A549 (cell line): ENCODE measurements at regions of chr7 and their contacts with region 1.

Region 1: GRCh38 chr7:108146070-108146837 is 16.1 kb upstream of the LAMB4 start:
- DNase-seq: peak; percentile 21 to 75
- ATAC-seq: peak; percentile 69 to 77; a peak in 4 of 6 replicates
- H3K4me3 ChIP-seq: no peak overlapping the region
- H3K27ac ChIP-seq: no peak overlapping the region
- H3K4me1 ChIP-seq: no peaks in the 10 kb centered on the region; the same call in 2 of the 3 replicates
- CTCF ChIP-seq: peak; percentile 91
- EP300 ChIP-seq: no peak
- POLR2A ChIP-seq: no peak
- RAD21 ChIP-seq: peak; percentile 94 to 95

Region 2: DNA sequence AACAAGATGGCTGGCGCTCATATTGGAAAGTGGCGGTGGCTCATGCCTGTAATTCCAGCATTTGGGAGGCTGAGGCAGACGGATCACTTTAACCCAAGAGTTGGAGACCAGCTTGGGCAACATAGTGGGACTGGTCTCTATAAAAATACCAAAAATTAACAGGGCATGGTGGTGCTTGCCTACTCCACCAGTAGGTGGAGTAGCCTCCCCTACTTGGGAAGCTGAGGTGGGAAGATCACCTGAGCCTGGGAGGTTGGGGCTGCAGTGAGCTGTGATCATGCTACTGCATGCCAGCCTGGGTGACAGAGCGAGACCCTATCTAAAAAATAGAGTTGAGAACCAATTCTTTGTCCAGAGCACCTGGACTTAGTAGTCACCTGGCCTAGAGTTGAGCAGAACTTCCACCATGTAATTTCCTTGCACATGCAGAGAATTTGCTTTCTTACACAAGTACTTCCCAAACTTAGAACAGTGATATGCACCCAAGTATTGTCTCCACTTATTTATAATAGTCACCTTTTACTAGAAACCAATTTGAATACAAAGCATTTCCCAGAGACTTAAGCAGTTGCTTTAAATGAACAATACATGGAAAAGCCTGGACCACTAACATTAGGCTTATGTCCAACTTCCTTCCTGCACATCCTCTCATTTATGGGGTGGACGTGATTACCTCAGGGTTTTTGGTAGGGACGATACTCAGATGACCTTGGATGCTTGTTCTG is 32.0 kb before region 1 on chr7:
- CTCF ChIA-PET with region 1: interaction called, 12 read pairs
- POLR2A ChIA-PET with region 1: no interaction called
- DNase-seq: peak; percentile 10 to 35
- ATAC-seq: peak; percentile 67 to 91; a peak in 4 of 6 replicates
- H3K4me3 ChIP-seq: no peak overlapping the region
- H3K27ac ChIP-seq: no peak overlapping the region
- H3K4me1 ChIP-seq: no peaks in the 10 kb centered on the region
- CTCF ChIP-seq: peak; percentile 55
- EP300 ChIP-seq: no peak
- POLR2A ChIP-seq: no peak
- RAD21 ChIP-seq: peak; percentile 57 to 81

Region 3: DNA sequence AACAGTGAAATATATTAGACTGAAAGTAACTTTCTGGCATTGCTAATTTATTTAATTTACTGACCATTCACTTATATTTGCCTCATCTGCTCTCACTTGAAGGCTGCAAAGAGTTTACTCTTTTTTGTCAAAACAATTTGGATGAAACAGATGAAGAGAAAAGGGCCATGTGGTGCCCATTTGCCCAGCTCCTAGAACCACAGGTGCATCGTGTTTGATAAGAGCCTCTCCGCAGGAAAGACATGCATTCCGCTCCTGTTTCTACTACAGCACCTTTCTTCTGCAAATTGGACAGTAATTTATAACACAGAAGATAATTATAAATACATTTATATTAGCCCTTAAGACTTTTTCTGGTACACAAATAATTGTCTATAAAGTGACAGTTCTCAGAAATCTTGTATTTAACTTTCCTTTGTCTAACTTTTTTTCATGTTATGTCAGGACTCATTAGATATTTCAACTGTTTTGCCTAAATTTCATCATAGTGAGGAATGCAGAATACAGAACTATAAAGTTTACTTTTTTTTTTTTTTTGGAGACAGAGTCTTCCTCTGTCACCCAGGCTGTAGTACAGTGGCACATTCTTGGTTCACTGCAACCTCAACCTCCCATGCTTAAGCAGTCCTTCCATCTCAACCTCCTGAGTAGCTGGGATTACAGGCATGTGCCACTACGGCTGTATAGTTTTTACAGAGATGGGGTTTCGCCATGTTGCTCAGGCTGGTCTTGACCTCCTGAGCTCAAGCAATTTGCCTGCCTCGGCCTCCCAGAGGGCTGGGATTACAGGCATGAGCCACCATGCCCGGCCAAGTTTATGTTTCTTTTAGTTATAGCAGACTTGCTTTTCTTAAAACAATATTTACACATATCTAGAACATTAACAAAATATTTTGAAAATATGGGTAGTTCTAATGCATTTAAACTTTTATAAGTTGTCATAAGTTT is 17.0 kb before region 1 on chr7:
- CTCF ChIA-PET with region 1: interaction called, 11 read pairs
- POLR2A ChIA-PET with region 1: no interaction called
- DNase-seq: no peak
- ATAC-seq: no peak
- H3K4me3 ChIP-seq: no peak overlapping the region
- H3K27ac ChIP-seq: no peak overlapping the region
- H3K4me1 ChIP-seq: no peaks in the 10 kb centered on the region
- CTCF ChIP-seq: no peak
- EP300 ChIP-seq: no peak
- POLR2A ChIP-seq: no peak
- RAD21 ChIP-seq: no peak

Region 4: DNA sequence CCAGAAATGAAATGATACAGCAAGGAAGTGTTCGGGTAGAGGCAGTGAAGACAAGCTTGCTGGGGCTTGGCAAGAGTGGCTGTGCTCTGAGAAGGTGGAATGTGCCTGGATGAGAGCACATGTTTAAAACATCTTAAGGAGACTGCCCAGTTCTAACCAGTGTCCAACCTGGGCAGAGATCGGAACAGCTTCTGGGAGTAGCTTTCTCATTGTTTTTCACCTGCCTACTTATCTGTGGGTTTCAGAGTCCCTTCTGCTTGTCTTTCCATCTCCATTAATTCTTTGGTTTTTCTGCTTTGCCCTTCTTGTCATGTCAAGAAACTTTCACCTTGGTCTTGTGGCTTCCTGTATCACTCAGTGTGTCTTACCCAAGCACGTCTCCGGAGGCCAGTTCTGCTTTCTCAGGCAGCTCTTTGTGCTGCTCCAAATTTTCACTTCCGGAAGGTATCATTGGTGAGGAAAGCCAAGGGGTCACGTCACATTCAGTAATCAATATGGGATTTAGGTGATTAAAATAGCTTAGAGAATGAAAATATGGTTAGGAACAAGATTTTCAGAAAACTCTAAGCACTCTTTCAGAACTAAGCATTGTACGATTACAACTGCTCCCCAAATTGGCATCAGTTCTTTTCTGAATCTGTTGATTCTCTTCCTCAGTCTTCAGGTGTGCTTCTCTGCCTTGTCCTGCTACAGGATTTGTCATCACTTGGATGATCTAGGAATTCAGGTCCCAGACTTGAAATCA is 10.6 kb before region 1 on chr7:
- CTCF ChIA-PET with region 1: interaction called, 19 read pairs
- POLR2A ChIA-PET with region 1: no interaction called
- DNase-seq: no peak
- ATAC-seq: no peak
- H3K4me3 ChIP-seq: no peak overlapping the region
- H3K27ac ChIP-seq: no peak overlapping the region
- H3K4me1 ChIP-seq: no peaks in the 10 kb centered on the region
- CTCF ChIP-seq: no peak
- EP300 ChIP-seq: no peak
- POLR2A ChIP-seq: no peak
- RAD21 ChIP-seq: no peak

Region 5: GRCh38 chr7:108358358-108358952 is 212.2 kb after region 1 on chr7:
- CTCF ChIA-PET with region 1: no interaction called
- POLR2A ChIA-PET with region 1: no interaction called
- DNase-seq: peak; percentile 29 to 89
- ATAC-seq: peak; percentile 100
- H3K4me3 ChIP-seq: no peak overlapping the region
- H3K27ac ChIP-seq: peak overlapping the region; percentile 54 to 69
- H3K4me1 ChIP-seq: peaks cover 32% of the 10 kb centered on the region
- CTCF ChIP-seq: no peak
- EP300 ChIP-seq: peak; percentile 37 to 46; a peak in 2 of 5 replicates
- POLR2A ChIP-seq: no peak
- RAD21 ChIP-seq: peak; percentile 8 to 37; a peak in 2 of 5 replicates